ENCODE measurements at regions of chrX and their contacts with region 1.

Region 1: DNA sequence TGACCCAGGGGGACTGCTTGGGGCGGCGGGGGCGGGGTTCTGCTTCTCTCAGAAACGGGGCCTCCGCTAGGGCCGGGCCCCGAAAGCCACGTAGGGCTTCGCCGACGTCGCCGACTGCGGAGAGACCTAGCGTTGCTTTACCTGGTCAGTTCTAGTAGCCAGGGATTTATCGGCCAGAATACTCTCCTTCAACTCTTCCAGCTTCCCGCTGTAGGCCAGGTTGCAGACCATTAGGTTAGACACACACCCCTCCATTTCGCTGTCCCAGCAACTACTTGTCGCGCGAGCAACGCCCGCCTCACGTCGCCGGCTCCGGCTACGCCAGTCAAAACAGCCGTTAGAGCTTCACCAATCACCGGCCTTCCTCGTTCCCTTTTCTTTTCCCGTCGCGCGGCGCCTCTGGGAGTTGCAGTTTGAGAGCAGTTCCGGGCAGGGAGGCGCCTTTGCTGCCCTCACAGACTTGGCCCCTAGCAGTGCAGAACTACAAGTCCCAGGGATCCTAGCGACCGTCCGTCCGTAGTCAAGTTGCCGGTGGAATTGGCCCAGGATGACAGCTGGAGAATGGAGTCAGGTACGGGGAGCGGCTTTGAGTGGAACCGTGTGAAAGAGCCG is at the starts of genes ATG4A and PSMD10:
- DNase-seq: peak; percentile 92 to 95 (median 94)
- ATAC-seq: peak; percentile 98 to 99 (median 98)
- H3K4me3 ChIP-seq: peak within 1 kb of the TSS; percentile 50 to 92 (median 68)
- H3K27ac ChIP-seq: peak within 1 kb of the TSS; percentile 50 to 91 (median 85)
- H3K4me1 ChIP-seq: peaks cover 0 to 25% (median 6%) of the 10 kb centered on the region in 12 donors
- H3K27me3 ChIP-seq: no peaks in the 10 kb centered on the region
- CTCF ChIP-seq: no peak
- POLR2A ChIP-seq: peak in 1 of 2 donors; percentile 32
- total RNA-seq, gene ATG4A: 15.0 to 22.5 (median 18.0) TPM
- total RNA-seq, gene PSMD10: 14.9 to 23.3 (median 21.2) TPM

Region 2: DNA sequence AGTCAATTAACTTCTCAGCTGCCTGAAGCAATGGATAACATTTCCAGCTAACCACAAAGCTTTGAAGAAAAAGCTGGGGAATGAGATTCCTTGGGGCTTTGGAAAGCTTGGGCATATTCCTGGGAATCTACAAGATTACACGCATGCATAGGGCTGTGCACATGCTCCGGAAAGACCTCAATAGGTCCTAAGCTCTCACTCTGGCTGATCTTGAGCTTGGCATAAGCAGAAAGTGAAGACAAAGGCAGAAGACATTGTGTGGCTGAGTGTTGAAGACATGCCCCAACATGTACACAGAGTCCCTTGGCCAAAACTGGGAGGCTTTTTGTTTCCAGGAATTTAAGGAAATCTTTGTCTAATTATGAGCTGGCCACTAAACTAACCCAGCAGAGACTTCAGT is 31.4 kb after region 1 on chrX:
- intact Hi-C with region 1: loop called in 2 of 10 experiments (anchors 5 kb)
- DNase-seq: no peak
- ATAC-seq: peak in 3 of 4 donors; percentile 8 to 28 (median 23)
- H3K4me3 ChIP-seq: no peak overlapping the region
- H3K27ac ChIP-seq: peak overlapping the region in 8 of 12 donors; percentile 25 to 63 (median 45)
- H3K4me1 ChIP-seq: peaks cover 0 to 52% (median 19%) of the 10 kb centered on the region in 12 donors
- H3K27me3 ChIP-seq: no peaks in the 10 kb centered on the region
- CTCF ChIP-seq: no peak
- POLR2A ChIP-seq: no peak

Region 3: DNA sequence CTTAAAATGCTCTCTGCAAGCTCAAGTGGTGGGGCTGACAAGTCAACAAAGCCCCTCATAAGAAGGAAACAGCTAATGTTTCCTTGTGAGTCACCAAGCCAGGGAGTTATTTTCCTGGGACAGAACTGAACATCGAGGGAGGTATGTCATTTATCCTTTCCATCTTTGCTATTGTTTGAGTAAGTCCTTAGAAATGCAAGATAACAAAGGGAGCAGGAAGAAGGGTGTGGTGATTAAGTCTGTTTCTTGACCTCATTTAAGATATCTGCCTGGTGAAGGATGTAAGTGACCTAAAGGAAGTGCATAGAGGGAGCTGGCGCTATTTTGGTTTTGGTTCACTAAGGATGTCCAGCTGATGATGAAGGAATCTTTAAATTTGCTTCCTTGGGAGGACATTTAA is 40.1 kb after region 1 on chrX:
- intact Hi-C with region 1: loop called in 4 of 10 experiments (anchors 5 to 10 kb)
- DNase-seq: peak in 1 of 5 donors; percentile 16
- ATAC-seq: peak in 3 of 4 donors; percentile 56 to 92 (median 67)
- H3K4me3 ChIP-seq: no peak overlapping the region
- H3K27ac ChIP-seq: peak overlapping the region in 11 of 12 donors; percentile 8 to 82 (median 70)
- H3K4me1 ChIP-seq: peaks cover 0 to 4% (median 0%) of the 10 kb centered on the region in 12 donors
- H3K27me3 ChIP-seq: peaks cover 0 to 9% (median 0%) of the 10 kb centered on the region in 9 donors
- CTCF ChIP-seq: no peak
- POLR2A ChIP-seq: no peak

Region 4: DNA sequence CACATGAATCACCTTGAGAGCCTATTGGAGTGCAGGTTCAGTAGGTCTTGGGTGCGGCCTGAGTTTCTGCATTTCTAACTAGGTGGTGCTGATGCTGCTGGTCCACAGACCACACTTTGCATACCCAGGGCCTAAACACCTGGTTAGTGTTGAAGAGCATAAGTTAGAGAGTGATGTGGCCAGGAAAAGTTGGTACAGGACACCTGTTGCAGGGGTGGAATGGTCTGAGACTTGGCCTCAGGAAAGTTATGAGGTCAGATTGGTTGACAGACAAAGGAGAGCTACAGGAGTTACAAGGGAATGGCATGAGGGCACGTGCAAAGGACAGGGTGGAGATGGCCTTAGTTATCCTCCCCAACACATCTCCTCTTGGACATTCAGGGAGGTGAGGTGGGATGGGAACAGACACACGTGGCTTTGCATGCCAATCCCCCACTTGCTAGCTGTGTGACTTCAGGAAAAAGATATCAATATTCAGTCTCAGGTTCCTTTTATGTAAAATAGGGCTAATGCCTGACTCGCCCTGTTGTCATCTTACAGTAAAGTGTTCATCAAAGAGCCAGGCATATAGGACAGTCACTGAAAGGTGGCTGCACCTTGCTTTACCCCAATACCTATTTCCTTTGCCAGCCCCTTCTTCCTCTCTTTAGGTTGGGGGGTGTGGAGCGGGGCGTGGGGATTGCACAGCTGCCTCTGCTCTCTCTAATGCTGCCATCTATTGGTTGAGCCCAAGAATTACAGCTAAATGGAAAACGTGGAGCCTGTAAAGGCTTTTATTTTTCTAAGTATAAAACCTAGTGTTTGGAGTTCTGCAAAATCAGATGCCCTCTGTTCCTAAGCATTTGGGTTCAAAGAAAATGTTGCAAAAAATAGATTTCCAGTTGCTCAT is 47.7 kb after region 1 on chrX:
- intact Hi-C with region 1: loop called in 2 of 10 experiments (anchors 5 to 10 kb)
- DNase-seq: no peak
- ATAC-seq: peak in 2 of 4 donors; percentile 30 to 34
- H3K4me3 ChIP-seq: no peak overlapping the region
- H3K27ac ChIP-seq: no peak overlapping the region
- H3K4me1 ChIP-seq: no peaks in the 10 kb centered on the region
- H3K27me3 ChIP-seq: no peaks in the 10 kb centered on the region
- CTCF ChIP-seq: peak; percentile 24 to 56 (median 44)
- POLR2A ChIP-seq: no peak